OCI-LY7 (cell line): ENCODE measurements at regions of chr15 and their contacts with region 1.

Region 1: GRCh38 chr15:58980351-58980939 is 7.0 kb upstream of the RNF111 start:
- DNase-seq: peak; percentile 65
- H3K4me3 ChIP-seq: peak overlapping the region; percentile 39
- H3K27ac ChIP-seq: peak overlapping the region; percentile 84
- H3K4me1 ChIP-seq: peaks cover 71% of the 10 kb centered on the region
- CTCF ChIP-seq: peak; percentile 89

Region 2: GRCh38 chr15:58588096-58588495 is 392.3 kb before region 1 on chr15:
- CTCF ChIA-PET with region 1: no interaction called
- POLR2A ChIA-PET with region 1: no interaction called
- intact Hi-C with region 1: no loop called
- DNase-seq: no peak
- H3K4me3 ChIP-seq: no peak overlapping the region
- H3K27ac ChIP-seq: no peak overlapping the region
- H3K4me1 ChIP-seq: peaks cover 27% of the 10 kb centered on the region
- CTCF ChIP-seq: no peak

Region 3: GRCh38 chr15:58909616-58910015 is 70.8 kb before region 1 on chr15:
- CTCF ChIA-PET with region 1: no interaction called
- POLR2A ChIA-PET with region 1: no interaction called
- intact Hi-C with region 1: no loop called
- DNase-seq: no peak
- H3K4me3 ChIP-seq: no peak overlapping the region
- H3K27ac ChIP-seq: no peak overlapping the region
- H3K4me1 ChIP-seq: no peaks in the 10 kb centered on the region
- CTCF ChIP-seq: no peak

Region 4: DNA sequence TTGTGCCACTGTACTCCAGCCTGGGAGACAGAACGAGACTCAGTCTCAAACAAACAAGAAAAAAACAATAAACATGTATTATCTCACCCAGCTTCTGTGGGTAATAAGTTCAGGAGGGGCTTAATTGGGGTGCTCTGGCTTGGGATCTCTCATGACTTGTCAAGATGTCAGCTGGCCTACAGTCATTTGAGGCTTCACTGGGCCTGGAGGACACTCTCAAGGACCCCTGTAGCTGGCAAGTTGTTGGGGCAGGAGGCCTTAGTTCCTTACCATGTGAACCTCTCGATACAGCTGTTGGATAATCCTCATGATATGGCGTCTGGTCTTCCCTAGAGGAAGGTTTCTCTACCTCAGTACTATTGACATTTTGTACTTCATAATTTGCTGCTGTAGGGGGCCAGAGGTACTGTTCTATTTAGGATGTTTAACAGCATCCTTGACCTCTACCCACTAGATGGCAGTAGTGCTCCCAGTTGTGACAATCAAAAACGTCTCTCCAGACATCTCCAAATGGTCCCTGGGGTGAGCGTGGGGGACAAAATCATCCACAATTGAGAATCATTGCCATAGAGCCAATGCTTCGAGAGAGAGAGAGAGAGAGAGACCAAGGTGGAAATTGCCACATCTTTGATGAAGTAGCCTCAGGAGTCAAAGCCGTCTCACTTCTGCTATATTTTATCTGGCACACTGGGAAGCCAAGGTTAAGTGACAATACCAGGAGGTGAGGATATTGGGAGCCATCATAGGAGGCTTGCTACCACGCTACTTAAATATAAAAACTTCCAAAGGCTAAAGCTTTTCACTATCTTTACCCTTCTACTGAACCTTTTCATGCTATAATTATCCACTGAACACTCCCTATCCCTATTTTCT is 23.1 kb before region 1 on chr15:
- CTCF ChIA-PET with region 1: no interaction called
- POLR2A ChIA-PET with region 1: interaction called, 6 read pairs
- intact Hi-C with region 1: loop called (anchors 1 kb)
- DNase-seq: peak; percentile 88
- H3K4me3 ChIP-seq: no peak overlapping the region
- H3K27ac ChIP-seq: no peak overlapping the region
- H3K4me1 ChIP-seq: peaks cover 8% of the 10 kb centered on the region
- CTCF ChIP-seq: peak; percentile 97

Region 5: DNA sequence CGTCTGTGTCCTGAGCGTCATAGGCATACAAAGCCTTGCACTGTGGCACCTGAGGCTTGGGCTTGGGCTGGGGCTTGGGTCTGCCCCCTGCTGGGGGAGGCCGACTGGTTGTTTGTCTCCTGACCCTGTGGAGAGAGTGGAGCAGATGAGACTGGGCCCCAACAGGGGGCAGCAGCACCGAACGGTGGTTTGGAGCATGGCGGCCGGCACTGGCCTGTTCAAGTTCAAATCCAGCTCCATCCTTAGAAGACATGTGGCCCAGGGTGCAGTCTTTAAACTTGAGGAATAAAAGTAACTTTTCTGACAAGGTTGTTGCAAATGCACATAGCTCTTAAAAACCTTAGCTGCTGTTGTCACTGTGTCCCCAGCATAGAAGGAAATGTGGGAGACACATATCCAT is 157.8 kb after region 1 on chr15:
- CTCF ChIA-PET with region 1: no interaction called
- POLR2A ChIA-PET with region 1: interaction called, 5 read pairs
- intact Hi-C with region 1: loop called (anchors 2 kb)
- DNase-seq: peak; percentile 78
- H3K4me3 ChIP-seq: no peak overlapping the region
- H3K27ac ChIP-seq: no peak overlapping the region
- H3K4me1 ChIP-seq: no peaks in the 10 kb centered on the region
- CTCF ChIP-seq: peak; percentile 99

Region 6: GRCh38 chr15:59399465-59400102 is 419.1 kb after region 1 on chr15:
- CTCF ChIA-PET with region 1: no interaction called
- POLR2A ChIA-PET with region 1: no interaction called
- intact Hi-C with region 1: loop called (anchors 5 kb)
- DNase-seq: peak; percentile 90
- H3K4me3 ChIP-seq: peak overlapping the region; percentile 54
- H3K27ac ChIP-seq: peak overlapping the region; percentile 81
- H3K4me1 ChIP-seq: peaks cover 98% of the 10 kb centered on the region
- CTCF ChIP-seq: peak; percentile 44; the same call in 1 of the 2 replicates

Region 7: DNA sequence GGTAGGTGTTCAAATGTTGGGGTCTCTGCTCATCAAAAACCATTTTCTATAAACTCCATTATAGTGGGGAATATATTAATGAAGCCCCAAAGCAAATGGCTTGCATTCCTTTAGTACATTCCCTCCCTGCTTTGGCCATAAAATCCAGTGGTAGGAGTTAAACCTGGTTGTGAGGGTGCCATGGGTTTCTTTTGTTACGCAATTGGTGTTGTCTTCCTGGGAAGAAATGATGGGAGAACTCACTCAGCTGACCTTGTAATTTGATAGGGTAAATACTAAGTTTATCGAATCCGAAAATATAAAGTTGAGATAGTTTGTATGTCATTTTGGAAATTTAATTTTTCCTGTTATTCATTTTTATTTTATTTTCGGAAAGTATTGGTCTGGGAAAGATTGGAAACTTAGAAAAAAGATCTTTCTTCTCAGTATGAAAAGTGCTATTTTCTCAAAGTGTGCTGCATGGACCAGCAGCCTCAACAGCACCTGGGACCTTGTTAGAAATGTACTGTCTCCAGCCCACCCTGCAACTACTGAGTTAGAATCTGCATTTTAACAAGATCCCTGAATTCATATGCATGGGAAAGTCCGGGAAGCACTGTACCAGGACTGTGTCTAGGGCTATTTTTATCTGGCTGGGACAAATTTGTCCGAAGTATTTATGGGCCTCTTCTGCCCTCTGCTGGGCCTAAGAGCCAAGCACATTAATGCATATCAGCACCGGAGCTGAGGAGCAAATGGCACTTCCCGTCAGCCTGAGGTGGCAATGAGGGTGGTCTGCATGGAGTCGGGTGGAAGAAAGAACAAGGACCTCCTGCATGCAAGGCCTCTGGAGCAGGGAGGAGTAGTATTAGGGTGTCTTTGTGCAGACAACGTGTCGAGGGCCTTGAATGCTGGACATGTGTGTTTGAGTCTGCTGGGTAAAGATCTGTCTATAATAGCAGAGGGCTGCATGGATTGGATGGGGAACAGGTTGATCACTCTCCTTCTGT is 512.2 kb after region 1 on chr15:
- CTCF ChIA-PET with region 1: no interaction called
- POLR2A ChIA-PET with region 1: no interaction called
- intact Hi-C with region 1: loop called (anchors 2 kb)
- DNase-seq: peak; percentile 76
- H3K4me3 ChIP-seq: no peak overlapping the region
- H3K27ac ChIP-seq: no peak overlapping the region
- H3K4me1 ChIP-seq: no peaks in the 10 kb centered on the region
- CTCF ChIP-seq: peak; percentile 98

Region 8: GRCh38 chr15:59587068-59587826 is 606.8 kb after region 1 on chr15:
- CTCF ChIA-PET with region 1: no interaction called
- POLR2A ChIA-PET with region 1: no interaction called
- intact Hi-C with region 1: no loop called
- DNase-seq: no peak
- H3K4me3 ChIP-seq: no peak overlapping the region
- H3K27ac ChIP-seq: no peak overlapping the region
- H3K4me1 ChIP-seq: no peaks in the 10 kb centered on the region
- CTCF ChIP-seq: no peak